MCF 10A (cell line): ENCODE measurements at regions of chr4 and their contacts with region 1.

Region 1: GRCh38 chr4:114659386-114660008 is 60.9 kb downstream of the UGT8 start:
- DNase-seq: peak; percentile 82
- H3K4me3 Mint-ChIP-seq: no peak overlapping the region
- H3K27ac Mint-ChIP-seq: no peak overlapping the region
- H3K4me1 Mint-ChIP-seq: no peaks in the 10 kb centered on the region
- H3K27me3 Mint-ChIP-seq: peaks cover 69% of the 10 kb centered on the region
- CTCF ChIP-seq: peak; percentile 82

Region 2: DNA sequence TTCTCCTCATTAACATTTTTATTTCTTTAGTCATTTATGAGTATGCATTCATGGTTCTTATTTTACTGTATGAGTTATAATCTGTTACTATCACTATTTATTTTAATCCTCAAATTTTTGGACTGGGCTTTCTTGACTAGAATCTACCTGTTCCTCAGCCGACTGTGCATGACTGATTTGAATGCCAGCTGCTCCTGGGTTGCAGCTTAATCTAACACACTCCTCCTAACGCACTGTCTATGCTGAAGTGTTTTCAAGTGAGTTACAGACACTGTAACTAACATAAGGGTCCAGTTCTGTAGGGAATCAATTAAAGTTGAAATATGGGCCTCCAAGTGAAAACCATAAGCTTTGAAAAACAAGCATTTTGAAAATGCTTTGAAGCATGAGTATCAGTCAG is 542.6 kb before region 1 on chr4:
- CTCF ChIA-PET with region 1: no interaction called
- POLR2A ChIA-PET with region 1: no interaction called
- intact Hi-C with region 1: no loop called
- DNase-seq: no peak
- H3K4me3 Mint-ChIP-seq: no peak overlapping the region
- H3K27ac Mint-ChIP-seq: no peak overlapping the region
- H3K4me1 Mint-ChIP-seq: no peaks in the 10 kb centered on the region
- H3K27me3 Mint-ChIP-seq: no peaks in the 10 kb centered on the region
- CTCF ChIP-seq: no peak

Region 3: DNA sequence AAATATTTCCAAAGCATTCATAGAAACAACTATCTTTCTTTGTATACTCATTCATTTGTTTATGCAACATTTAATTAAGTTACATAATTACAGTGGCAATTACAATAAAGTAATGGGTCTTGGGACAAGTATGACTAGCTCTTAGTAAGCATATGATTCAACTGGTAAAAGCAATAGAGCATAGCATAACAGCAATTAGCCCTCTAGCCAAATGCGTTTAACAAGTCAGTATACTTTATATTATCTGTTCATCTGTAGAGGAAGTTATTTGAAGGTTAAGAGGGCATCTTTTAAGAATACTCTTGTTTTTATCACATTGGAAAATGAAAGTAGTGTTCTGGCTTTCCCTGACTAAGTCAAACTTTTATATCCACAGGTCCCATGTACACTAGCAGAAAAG is 259.0 kb before region 1 on chr4:
- CTCF ChIA-PET with region 1: interaction called, 5 read pairs
- POLR2A ChIA-PET with region 1: no interaction called
- intact Hi-C with region 1: loop called (anchors 5 kb)
- DNase-seq: peak; percentile 26
- H3K4me3 Mint-ChIP-seq: no peak overlapping the region
- H3K27ac Mint-ChIP-seq: no peak overlapping the region
- H3K4me1 Mint-ChIP-seq: no peaks in the 10 kb centered on the region
- H3K27me3 Mint-ChIP-seq: peaks cover 17% of the 10 kb centered on the region
- CTCF ChIP-seq: no peak

Region 4: DNA sequence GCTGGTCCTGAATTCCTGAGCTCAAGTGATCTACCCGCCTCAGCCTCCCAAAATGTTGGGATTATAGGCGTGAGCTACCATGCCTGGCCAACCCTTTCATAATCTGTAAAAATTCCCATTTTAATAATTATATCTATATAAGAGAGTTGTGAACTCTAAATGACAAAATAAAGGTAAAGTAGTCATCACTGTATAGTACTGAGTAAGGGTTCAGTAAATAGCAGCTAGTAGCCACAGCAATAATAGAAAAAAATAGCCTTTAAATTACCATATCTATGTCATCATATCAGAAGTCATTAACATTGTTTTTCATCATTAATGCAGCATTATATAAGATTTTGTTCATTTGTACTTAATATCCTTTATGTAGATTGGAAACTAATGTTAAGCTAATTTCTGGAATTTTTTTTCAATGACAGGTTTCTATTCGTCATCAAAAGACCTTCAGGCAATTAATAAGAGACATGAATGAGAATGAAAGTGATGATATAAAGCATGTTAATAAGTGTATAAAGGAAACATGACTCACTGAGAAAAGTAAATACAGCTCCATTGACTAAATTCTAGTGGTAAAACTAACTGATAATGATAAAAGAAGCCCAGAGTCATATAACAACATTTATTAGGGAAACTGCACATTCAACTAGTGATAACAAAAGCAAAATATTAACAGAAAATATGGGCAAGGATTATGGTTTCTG is 146.8 kb before region 1 on chr4:
- CTCF ChIA-PET with region 1: interaction called, 5 read pairs
- POLR2A ChIA-PET with region 1: no interaction called
- intact Hi-C with region 1: loop called (anchors 5 kb)
- DNase-seq: peak; percentile 25
- H3K4me3 Mint-ChIP-seq: no peak overlapping the region
- H3K27ac Mint-ChIP-seq: no peak overlapping the region
- H3K4me1 Mint-ChIP-seq: no peaks in the 10 kb centered on the region
- H3K27me3 Mint-ChIP-seq: peaks cover 5% of the 10 kb centered on the region
- CTCF ChIP-seq: no peak

Region 5: GRCh38 chr4:114694770-114695169 is 35.3 kb after region 1 on chr4:
- CTCF ChIA-PET with region 1: interaction called, 5 read pairs
- POLR2A ChIA-PET with region 1: no interaction called
- intact Hi-C with region 1: loop called (anchors 1 kb)
- DNase-seq: peak; percentile 49
- H3K4me3 Mint-ChIP-seq: no peak overlapping the region
- H3K27ac Mint-ChIP-seq: no peak overlapping the region
- H3K4me1 Mint-ChIP-seq: no peaks in the 10 kb centered on the region
- H3K27me3 Mint-ChIP-seq: peaks cover 25% of the 10 kb centered on the region
- CTCF ChIP-seq: peak; percentile 55